Activated CD4-positive, alpha-beta T cell treated with anti-CD3 and anti-CD28 coated beads, Interleukin-2, amount 10 ng/mL, durations not matched to agents 7 days and 5 days (primary cell): ENCODE measurements at regions of chr12 and their contacts with region 1.

Region 1: GRCh38 chr12:54337280-54337842 is 12.4 kb downstream of the COPZ1 start:
- DNase-seq: no peak
- H3K4me3 Mint-ChIP-seq: no peak overlapping the region
- H3K27ac Mint-ChIP-seq: no peak overlapping the region
- H3K4me1 Mint-ChIP-seq: peaks cover 13% of the 10 kb centered on the region
- H3K27me3 Mint-ChIP-seq: no peaks in the 10 kb centered on the region

Region 2: GRCh38 chr12:54229624-54230212 is 107.6 kb before region 1 on chr12:
- CTCF ChIA-PET with region 1: no interaction called
- POLR2A ChIA-PET with region 1: no interaction called
- DNase-seq: no peak
- H3K4me3 Mint-ChIP-seq: no peak overlapping the region
- H3K27ac Mint-ChIP-seq: no peak overlapping the region
- H3K4me1 Mint-ChIP-seq: peaks cover 22% of the 10 kb centered on the region
- H3K27me3 Mint-ChIP-seq: no peaks in the 10 kb centered on the region

Region 3: DNA sequence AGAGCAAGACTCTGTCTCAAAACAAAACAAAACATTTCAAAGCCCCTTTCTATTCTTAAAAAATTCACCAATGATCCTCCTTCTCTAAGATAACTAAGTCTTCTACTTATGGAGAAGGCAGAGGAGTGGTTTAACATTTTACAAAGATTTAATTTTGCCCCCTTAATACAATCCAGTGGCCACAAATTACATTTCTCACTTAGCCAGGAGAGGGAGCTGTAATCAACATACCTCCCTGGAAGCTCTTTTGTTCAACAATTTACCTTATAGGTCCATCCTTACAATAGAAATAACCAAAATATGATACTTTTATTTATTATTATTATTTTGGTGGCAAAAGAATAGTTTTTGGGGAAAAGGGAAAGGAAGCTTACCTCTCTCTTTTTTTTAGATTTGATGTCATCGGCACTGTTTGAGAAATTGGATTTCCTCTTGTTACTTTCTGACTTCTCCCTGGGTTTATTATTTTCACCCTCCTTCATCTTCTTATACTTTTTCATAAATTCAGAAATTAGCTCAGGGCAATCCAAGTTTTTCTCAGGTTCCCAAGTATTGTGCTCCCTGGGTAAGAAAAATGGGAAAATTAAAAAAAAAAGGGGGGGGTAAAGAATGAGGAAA is 85.6 kb before region 1 on chr12:
- CTCF ChIA-PET with region 1: no interaction called
- POLR2A ChIA-PET with region 1: no interaction called
- DNase-seq: peak; percentile 27
- H3K4me3 Mint-ChIP-seq: no peak overlapping the region
- H3K27ac Mint-ChIP-seq: no peak overlapping the region
- H3K4me1 Mint-ChIP-seq: peaks cover 8% of the 10 kb centered on the region
- H3K27me3 Mint-ChIP-seq: no peaks in the 10 kb centered on the region

Region 4: GRCh38 chr12:54294152-54294952 is 43.0 kb before region 1 on chr12:
- CTCF ChIA-PET with region 1: interaction called, 15 read pairs
- POLR2A ChIA-PET with region 1: interaction called, 3 read pairs
- DNase-seq: peak; percentile 72
- H3K4me3 Mint-ChIP-seq: no peak overlapping the region
- H3K27ac Mint-ChIP-seq: no peak overlapping the region
- H3K4me1 Mint-ChIP-seq: peaks cover 9% of the 10 kb centered on the region
- H3K27me3 Mint-ChIP-seq: peaks cover 15% of the 10 kb centered on the region

Region 5: DNA sequence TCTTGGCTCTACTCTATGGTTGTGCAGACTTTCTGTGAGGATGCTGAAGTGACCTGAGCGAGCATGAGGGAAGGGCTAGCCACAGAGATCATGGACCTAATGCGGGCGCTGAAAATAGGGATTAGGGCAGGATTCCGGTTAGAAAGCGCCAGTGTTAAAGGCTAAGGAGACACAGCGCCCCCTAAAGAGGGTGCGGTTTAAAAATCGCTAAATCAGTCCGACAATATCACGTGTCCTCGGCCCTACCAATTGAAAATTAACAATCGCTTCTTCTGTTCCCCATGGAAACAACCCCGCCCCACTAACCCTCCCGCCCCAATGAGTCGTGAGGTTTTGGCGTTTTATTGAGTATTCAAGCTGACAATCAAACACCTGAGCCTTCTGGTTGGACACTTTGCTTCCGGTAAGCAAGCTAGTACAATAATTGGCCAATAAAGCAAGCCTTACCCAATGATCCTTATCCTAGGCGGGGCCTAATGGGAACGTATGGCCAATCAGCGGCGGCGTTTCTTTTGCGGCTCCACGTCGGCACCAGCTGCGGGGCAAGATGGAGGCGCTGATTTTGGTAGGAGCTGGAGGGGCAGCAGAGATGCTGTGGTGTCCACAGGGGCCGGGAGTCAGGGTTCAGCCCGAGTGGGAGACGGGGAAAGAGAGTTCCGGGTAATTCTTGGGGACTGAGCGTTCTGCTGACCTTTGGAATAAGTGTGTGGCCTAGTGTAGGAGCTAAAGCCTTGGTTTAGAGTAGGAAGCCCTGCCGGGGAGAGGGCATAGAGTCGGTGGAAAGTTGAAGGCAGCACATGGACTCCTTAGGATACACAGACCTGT is 12.5 kb before region 1 on chr12 and contains the start of gene COPZ1:
- CTCF ChIA-PET with region 1: interaction called, 22 read pairs
- POLR2A ChIA-PET with region 1: no interaction called
- DNase-seq: peak; percentile 97
- H3K4me3 Mint-ChIP-seq: peak within 1 kb of the TSS; percentile 95
- H3K27ac Mint-ChIP-seq: peak within 1 kb of the TSS; percentile 97
- H3K4me1 Mint-ChIP-seq: peaks cover 46% of the 10 kb centered on the region
- H3K27me3 Mint-ChIP-seq: no peaks in the 10 kb centered on the region
- total RNA-seq, gene COPZ1: 113 to 124 TPM

Region 6: GRCh38 chr12:54352022-54352531 is 14.7 kb after region 1 on chr12:
- CTCF ChIA-PET with region 1: interaction called, 11 read pairs
- POLR2A ChIA-PET with region 1: no interaction called
- DNase-seq: no peak
- H3K4me3 Mint-ChIP-seq: peak overlapping the region; percentile 18
- H3K27ac Mint-ChIP-seq: peak overlapping the region; percentile 46
- H3K4me1 Mint-ChIP-seq: peaks cover 20% of the 10 kb centered on the region
- H3K27me3 Mint-ChIP-seq: no peaks in the 10 kb centered on the region

Region 7: DNA sequence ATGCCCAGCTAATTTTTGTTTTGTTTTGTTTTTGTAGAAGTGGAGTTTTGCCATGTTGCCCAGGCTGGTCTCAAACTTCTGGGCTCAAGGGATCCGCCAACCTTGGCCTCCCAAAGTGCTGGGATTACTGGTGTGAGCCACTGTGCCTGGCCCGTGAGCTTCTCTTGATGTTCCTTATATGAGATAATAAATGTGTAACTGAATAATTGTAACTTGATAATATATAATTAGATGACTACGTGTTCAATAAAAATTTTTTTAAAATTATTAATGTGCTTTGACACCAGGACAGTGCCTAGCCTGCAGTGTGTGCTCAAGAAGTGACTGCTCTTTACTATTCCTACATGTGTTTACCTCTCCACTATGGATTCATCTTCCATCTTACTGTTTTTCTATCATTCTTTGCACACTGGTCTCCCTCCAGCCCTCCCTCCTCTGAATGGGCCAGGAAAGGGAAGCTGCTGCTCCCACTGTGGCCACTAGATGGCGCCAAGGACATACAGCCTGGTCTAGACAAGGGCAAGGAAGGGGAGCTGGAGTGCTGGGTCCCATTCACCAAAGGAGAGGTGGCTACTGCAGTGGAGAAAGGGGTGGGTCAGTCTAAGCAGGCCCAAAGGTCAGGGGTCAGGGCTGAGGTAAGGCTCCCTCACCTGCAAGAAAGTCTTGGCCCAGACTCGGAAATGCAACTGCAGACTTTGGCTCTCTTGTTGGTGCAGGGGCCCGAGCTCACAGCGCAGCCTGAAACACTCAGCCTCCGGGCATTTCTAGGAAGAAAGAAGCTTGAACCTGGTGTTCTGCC is 61.8 kb after region 1 on chr12:
- CTCF ChIA-PET with region 1: no interaction called
- POLR2A ChIA-PET with region 1: no interaction called
- DNase-seq: peak; percentile 90
- H3K4me3 Mint-ChIP-seq: no peak overlapping the region
- H3K27ac Mint-ChIP-seq: no peak overlapping the region
- H3K4me1 Mint-ChIP-seq: peaks cover 21% of the 10 kb centered on the region
- H3K27me3 Mint-ChIP-seq: no peaks in the 10 kb centered on the region

Region 8: GRCh38 chr12:54419088-54419892 is 81.9 kb after region 1 on chr12 and contains the start of gene ITGA5:
- CTCF ChIA-PET with region 1: no interaction called
- POLR2A ChIA-PET with region 1: no interaction called
- DNase-seq: peak; percentile 36
- H3K4me3 Mint-ChIP-seq: peak within 1 kb of the TSS; percentile 98
- H3K27ac Mint-ChIP-seq: peak within 1 kb of the TSS; percentile 94
- H3K4me1 Mint-ChIP-seq: peaks cover 57% of the 10 kb centered on the region
- H3K27me3 Mint-ChIP-seq: peaks cover 32% of the 10 kb centered on the region
- total RNA-seq, gene ITGA5: 83.5 to 88.7 TPM